PC-9 (cell line): ENCODE measurements at regions of chr17 and their contacts with region 1.

Region 1: DNA sequence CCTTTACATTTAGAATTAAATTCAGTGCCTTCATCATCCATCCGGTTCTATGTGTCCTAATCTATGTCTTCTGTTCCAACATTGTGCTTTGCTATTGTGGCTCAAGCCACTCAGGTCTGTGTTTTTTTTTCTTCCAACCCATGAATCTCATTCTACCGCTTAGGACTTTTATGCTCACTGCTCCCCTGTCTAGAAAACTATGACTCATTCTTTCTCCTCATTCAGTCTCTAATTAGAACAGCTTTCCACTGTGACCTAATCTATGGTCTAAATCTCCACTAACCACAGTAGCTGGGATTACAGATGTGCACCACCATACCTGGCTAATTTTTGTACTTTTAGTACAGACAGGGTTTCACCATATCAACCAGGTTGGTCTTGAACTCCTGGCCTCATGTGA is 418.7 kb downstream of the KCNJ2 start:
- DNase-seq: no peak
- H3K4me3 ChIP-seq: no peak overlapping the region
- H3K27ac ChIP-seq: no peak overlapping the region
- H3K4me1 ChIP-seq: no peaks in the 10 kb centered on the region
- H3K27me3 ChIP-seq: no peaks in the 10 kb centered on the region
- CTCF ChIP-seq: no peak

Region 2: DNA sequence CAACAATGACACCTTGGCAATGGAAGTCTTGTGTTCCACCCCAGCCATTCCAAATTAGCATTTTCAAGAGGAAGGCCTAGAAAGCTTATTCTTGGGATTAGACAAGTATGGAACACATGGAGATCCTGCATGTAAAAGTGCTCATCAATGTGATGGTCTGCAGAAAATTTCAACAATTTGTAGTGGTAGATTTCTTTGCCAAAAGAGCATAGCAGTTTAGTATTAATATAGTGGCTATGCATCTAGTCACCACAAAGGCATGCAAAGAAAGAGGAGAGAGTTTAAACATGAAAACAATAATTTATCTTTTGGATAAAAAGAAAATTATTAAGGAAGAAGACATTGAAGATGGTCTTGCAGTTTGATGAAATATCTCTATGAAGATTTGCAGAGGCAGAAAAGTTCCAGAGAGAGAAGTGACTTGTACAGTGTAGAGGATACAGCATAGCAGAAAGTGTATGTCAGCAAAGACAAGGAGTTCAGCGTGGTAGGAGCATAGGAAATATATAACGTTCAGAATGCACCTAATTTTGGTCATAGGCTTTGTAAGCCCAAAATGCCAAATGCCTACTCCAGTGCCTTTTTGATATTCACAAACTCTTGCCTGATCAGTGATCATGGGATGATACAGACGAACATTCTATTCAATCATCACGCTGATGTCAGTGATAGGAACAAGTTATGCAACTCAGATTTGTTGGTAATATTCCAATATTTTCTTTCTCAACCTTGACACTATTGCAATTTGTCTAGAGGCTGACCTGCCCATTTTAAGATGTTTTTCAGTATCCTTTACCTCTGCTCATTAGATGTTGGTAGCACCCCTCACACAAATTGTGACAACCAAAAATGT is 804.9 kb after region 1 on chr17:
- CTCF ChIA-PET with region 1: interaction called, 10 read pairs
- POLR2A ChIA-PET with region 1: no interaction called
- intact Hi-C with region 1: no loop called
- DNase-seq: no peak
- H3K4me3 ChIP-seq: no peak overlapping the region
- H3K27ac ChIP-seq: no peak overlapping the region
- H3K4me1 ChIP-seq: no peaks in the 10 kb centered on the region
- H3K27me3 ChIP-seq: no peaks in the 10 kb centered on the region
- CTCF ChIP-seq: no peak